AG04449 (cell line): ENCODE measurements at regions of chr5 and their contacts with region 1.

Region 1: GRCh38 chr5:151758430-151759241 is at the start of gene ATOX1:
- DNase-seq: no peak
- H3K4me3 ChIP-seq: peak within 1 kb of the TSS; percentile 89
- CTCF ChIP-seq: peak; percentile 4

Region 2: DNA sequence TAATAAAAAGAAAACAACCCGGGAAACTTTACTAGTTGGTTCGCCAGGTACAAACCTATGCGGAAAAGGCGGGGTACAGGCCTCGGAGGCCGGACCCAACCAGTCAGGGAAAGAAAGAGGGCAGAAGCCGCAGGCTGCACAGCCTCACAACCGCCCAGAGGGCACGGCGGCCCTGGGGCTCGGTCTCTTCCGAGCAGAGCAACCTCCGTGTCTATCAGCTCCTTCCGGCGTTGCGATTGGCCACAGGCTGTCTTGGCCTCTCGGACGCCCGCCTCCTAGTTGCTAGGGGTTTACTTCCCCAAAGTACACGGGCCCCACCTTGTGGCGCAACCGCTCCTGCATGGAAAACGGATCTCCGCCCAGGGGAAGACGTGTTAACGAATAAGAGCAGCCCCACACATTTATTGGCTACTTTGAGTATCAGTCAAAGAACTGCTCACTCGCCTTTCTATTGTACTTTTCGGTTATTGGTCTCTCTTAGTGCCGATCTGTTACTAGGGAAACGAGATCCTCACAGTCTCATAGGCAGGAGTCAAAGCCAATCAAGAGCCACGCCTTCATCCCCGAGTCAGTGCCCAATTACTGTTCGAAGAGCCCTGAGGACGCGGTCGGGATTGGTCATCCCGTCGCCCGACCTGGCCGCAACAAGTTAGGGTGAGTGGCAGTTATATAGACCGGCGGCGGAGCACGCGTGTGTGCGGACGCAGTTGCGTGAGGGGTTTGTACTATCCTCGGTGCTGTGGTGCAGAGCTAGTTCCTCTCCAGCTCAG is 12.8 kb after region 1 on chr5 and contains the start of gene G3BP1:
- CTCF ChIA-PET with region 1: interaction called, 28 read pairs
- POLR2A ChIA-PET with region 1: interaction called, 12 read pairs
- DNase-seq: peak; percentile 100
- H3K4me3 ChIP-seq: peak within 1 kb of the TSS; percentile 87
- CTCF ChIP-seq: peak; percentile 66